Dorsolateral prefrontal cortex (tissue), 120 donors: ENCODE measurements at regions of chr20 and their contacts with region 1.

Region 1: DNA sequence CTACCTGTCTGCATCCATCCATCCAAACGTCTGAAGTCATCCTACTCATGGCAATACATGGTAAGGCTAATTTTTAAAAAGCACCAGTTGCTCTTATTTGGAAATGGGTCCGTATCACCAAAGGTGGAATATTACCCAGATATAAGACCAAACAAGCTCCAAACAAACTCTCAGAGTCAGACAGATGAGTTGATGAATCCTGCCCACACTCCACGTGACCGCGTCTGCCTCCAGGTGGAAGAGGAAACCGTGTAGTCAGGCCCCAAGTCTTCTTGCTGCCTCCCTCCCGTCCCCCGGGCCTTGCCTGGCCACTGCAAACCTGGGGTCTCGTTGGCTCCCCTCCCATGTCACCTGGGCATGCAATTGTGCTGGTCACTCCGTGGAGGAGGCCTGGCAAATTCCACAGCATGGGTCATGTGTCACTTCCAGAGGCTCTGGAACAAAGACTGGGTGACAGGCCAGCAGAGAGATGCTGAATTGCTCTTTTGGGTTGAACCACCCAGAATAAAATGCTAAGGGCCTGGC is 31.8 kb downstream of the CTCFL start:
- DNase-seq: no peak
- H3K4me3 ChIP-seq: no peak overlapping the region
- H3K27ac ChIP-seq: no peak overlapping the region
- H3K27me3 ChIP-seq: no peaks in the 10 kb centered on the region
- CTCF ChIP-seq: no peak

Region 2: GRCh38 chr20:57383447-57384347 is 109.5 kb before region 1 on chr20:
- intact Hi-C with region 1: loop called (anchors 1 kb)
- DNase-seq: peak in 1 of 10 donors; percentile 4
- H3K4me3 ChIP-seq: no peak overlapping the region
- H3K27ac ChIP-seq: no peak overlapping the region
- H3K27me3 ChIP-seq: no peaks in the 10 kb centered on the region
- CTCF ChIP-seq: no peak

Region 3: GRCh38 chr20:57440678-57441520 is 52.3 kb before region 1 on chr20:
- intact Hi-C with region 1: loop called in 1 of 2 experiments (anchors 5 kb)
- DNase-seq: peak; percentile 36 to 97 (median 90)
- H3K4me3 ChIP-seq: peak overlapping the region in 2 of 59 donors; percentile 23
- H3K27ac ChIP-seq: peak overlapping the region; percentile 76 to 98 (median 92)
- H3K27me3 ChIP-seq: no peaks in the 10 kb centered on the region
- CTCF ChIP-seq: peak in 10 of 56 donors; percentile 3 to 27 (median 16)